Activated naive CD4-positive, alpha-beta T cell treated with anti-CD3 and anti-CD28 coated beads for 36 hours (primary cell): ENCODE measurements at regions of chr1 and their contacts with region 1.

Region 1: GRCh38 chr1:16236511-16237342 is at the start of gene CPLANE2:
- DNase-seq: peak; percentile 98
- H3K4me3 Mint-ChIP-seq: peak within 1 kb of the TSS; percentile 84
- H3K27ac Mint-ChIP-seq: peak within 1 kb of the TSS; percentile 88
- H3K4me1 Mint-ChIP-seq: peaks cover 14% of the 10 kb centered on the region
- H3K27me3 Mint-ChIP-seq: no peaks in the 10 kb centered on the region
- total RNA-seq, gene CPLANE2: 2.7 to 4.0 TPM

Region 2: DNA sequence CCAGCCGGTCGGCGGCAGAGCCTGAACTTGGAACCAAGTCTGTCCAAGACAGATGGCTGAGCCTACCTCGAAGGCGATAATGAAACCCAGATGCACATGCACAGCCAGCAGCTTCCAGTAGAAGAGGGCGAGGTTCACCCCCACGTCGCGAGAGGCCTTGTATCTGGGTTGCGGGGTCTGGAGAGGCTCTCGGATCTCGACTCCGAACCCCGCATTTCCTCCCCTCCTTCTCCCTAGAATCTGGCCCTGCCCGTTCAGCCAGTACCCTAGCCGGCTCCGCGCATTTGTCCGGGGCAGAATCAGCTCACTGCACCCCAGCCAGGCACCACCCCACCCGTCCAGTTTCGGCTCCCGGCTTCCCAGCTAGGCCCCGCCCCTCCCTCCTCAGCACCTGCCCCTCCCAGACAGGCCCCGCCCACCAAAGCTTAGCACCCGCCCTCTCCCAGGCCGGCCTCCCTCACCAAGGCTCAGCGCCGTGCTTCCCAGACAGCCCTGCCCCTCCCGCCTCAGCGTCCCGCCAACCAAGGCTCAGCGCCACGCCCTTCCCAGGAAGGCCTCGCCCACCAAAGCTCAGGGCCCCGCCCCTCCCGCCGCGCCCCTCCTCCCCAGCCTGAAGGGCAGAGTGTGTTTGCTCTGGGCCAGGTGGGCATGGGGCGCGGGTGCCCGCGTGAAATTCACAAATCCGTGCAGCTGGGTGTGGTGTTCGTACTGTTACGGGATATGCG is 19.5 kb before region 1 on chr1:
- CTCF ChIA-PET with region 1: interaction called, 3 read pairs
- intact Hi-C with region 1: loop called (anchors 1 kb)
- DNase-seq: peak; percentile 98
- H3K4me3 Mint-ChIP-seq: peak overlapping the region; percentile 82
- H3K27ac Mint-ChIP-seq: no peak overlapping the region
- H3K4me1 Mint-ChIP-seq: peaks cover 17% of the 10 kb centered on the region
- H3K27me3 Mint-ChIP-seq: no peaks in the 10 kb centered on the region

Region 3: GRCh38 chr1:16451841-16452528 is 215.3 kb after region 1 on chr1:
- CTCF ChIA-PET with region 1: no interaction called
- intact Hi-C with region 1: no loop called
- DNase-seq: no peak
- H3K4me3 Mint-ChIP-seq: no peak overlapping the region
- H3K27ac Mint-ChIP-seq: peak overlapping the region; percentile 64
- H3K4me1 Mint-ChIP-seq: peaks cover 38% of the 10 kb centered on the region
- H3K27me3 Mint-ChIP-seq: no peaks in the 10 kb centered on the region

Region 4: GRCh38 chr1:16498573-16499413 is 262.1 kb after region 1 on chr1:
- CTCF ChIA-PET with region 1: no interaction called
- intact Hi-C with region 1: loop called (anchors 10 kb)
- DNase-seq: peak; percentile 88
- H3K4me3 Mint-ChIP-seq: peak overlapping the region; percentile 77
- H3K27ac Mint-ChIP-seq: no peak overlapping the region
- H3K4me1 Mint-ChIP-seq: peaks cover 13% of the 10 kb centered on the region
- H3K27me3 Mint-ChIP-seq: no peaks in the 10 kb centered on the region